ENCODE measurements at regions of chr6 and their contacts with region 1.

Region 1: GRCh38 chr6:110179401-110180227 is at the start of gene WASF1:
- DNase-seq: peak; percentile 77 to 95 (median 89)
- ATAC-seq: peak; percentile 84
- H3K4me3 ChIP-seq: peak within 1 kb of the TSS; percentile 83 to 96
- H3K4me3 Mint-ChIP-seq: peak within 1 kb of the TSS; percentile 77
- H3K27ac ChIP-seq: peak within 1 kb of the TSS; percentile 72 to 79
- H3K27ac Mint-ChIP-seq: peak within 1 kb of the TSS; percentile 38
- H3K4me1 ChIP-seq: peaks cover 28% of the 10 kb centered on the region
- H3K4me1 Mint-ChIP-seq: peaks cover 7% of the 10 kb centered on the region
- H3K27me3 ChIP-seq: no peaks in the 10 kb centered on the region
- H3K27me3 Mint-ChIP-seq: peaks cover 9% of the 10 kb centered on the region
- CTCF ChIP-seq: no peak
- total RNA-seq, gene WASF1: 1.1 to 1.7 TPM

Region 2: GRCh38 chr6:109482905-109483735 is 696.5 kb before region 1 on chr6 and contains the start of gene ZBTB24:
- CTCF ChIA-PET with region 1: no interaction called
- POLR2A ChIA-PET with region 1: no interaction called
- intact Hi-C with region 1: loop called (anchors 1 kb)
- DNase-seq: peak; percentile 75 to 96 (median 88)
- ATAC-seq: peak; percentile 85
- H3K4me3 ChIP-seq: peak within 1 kb of the TSS; percentile 65 to 69
- H3K4me3 Mint-ChIP-seq: peak within 1 kb of the TSS; percentile 95
- H3K27ac ChIP-seq: peak within 1 kb of the TSS; percentile 49 to 62
- H3K27ac Mint-ChIP-seq: peak within 1 kb of the TSS; percentile 89
- H3K4me1 ChIP-seq: peaks cover 37% of the 10 kb centered on the region
- H3K4me1 Mint-ChIP-seq: peaks cover 50% of the 10 kb centered on the region
- H3K27me3 ChIP-seq: no peaks in the 10 kb centered on the region
- H3K27me3 Mint-ChIP-seq: no peaks in the 10 kb centered on the region
- CTCF ChIP-seq: no peak
- total RNA-seq, gene ZBTB24: 10.9 to 11.2 TPM

Region 3: GRCh38 chr6:109705258-109705657 is 474.4 kb before region 1 on chr6:
- CTCF ChIA-PET with region 1: no interaction called
- POLR2A ChIA-PET with region 1: no interaction called
- intact Hi-C with region 1: loop called (anchors 5 kb)
- DNase-seq: peak; percentile 50 to 90 (median 72)
- ATAC-seq: peak; percentile 98
- H3K4me3 ChIP-seq: no peak overlapping the region
- H3K4me3 Mint-ChIP-seq: no peak overlapping the region
- H3K27ac ChIP-seq: no peak overlapping the region
- H3K27ac Mint-ChIP-seq: no peak overlapping the region
- H3K4me1 ChIP-seq: peaks cover 10% of the 10 kb centered on the region
- H3K4me1 Mint-ChIP-seq: peaks cover 27% of the 10 kb centered on the region
- H3K27me3 ChIP-seq: no peaks in the 10 kb centered on the region
- H3K27me3 Mint-ChIP-seq: no peaks in the 10 kb centered on the region
- CTCF ChIP-seq: peak; percentile 82

Region 4: DNA sequence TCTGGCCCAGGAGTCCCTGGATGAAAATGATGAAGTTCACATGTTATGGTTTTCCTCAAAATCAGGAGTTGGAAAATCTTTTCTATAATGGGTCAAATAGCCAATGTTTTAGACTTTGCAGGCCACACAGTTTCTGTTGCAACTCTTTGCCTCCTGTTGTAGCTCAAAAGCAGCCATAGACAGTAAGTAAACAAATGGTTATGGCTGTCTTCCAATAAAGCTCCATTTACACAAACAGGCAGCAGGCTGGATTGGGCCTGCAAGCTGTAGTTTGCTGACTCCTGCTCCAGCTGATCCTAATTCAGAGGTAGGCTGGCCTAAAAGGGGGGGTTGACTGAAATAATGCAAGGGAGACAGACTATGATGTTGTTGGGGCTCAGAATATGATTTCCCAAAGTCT is 145.6 kb after region 1 on chr6:
- CTCF ChIA-PET with region 1: no interaction called
- POLR2A ChIA-PET with region 1: no interaction called
- intact Hi-C with region 1: no loop called
- DNase-seq: no peak
- ATAC-seq: no peak
- H3K4me3 ChIP-seq: no peak overlapping the region
- H3K4me3 Mint-ChIP-seq: no peak overlapping the region
- H3K27ac ChIP-seq: no peak overlapping the region
- H3K27ac Mint-ChIP-seq: no peak overlapping the region
- H3K4me1 ChIP-seq: no peaks in the 10 kb centered on the region
- H3K4me1 Mint-ChIP-seq: peaks cover 10% of the 10 kb centered on the region
- H3K27me3 ChIP-seq: peaks cover 0 to 2% of the 10 kb centered on the region in 2 experiments
- H3K27me3 Mint-ChIP-seq: no peaks in the 10 kb centered on the region
- CTCF ChIP-seq: no peak

Region 5: DNA sequence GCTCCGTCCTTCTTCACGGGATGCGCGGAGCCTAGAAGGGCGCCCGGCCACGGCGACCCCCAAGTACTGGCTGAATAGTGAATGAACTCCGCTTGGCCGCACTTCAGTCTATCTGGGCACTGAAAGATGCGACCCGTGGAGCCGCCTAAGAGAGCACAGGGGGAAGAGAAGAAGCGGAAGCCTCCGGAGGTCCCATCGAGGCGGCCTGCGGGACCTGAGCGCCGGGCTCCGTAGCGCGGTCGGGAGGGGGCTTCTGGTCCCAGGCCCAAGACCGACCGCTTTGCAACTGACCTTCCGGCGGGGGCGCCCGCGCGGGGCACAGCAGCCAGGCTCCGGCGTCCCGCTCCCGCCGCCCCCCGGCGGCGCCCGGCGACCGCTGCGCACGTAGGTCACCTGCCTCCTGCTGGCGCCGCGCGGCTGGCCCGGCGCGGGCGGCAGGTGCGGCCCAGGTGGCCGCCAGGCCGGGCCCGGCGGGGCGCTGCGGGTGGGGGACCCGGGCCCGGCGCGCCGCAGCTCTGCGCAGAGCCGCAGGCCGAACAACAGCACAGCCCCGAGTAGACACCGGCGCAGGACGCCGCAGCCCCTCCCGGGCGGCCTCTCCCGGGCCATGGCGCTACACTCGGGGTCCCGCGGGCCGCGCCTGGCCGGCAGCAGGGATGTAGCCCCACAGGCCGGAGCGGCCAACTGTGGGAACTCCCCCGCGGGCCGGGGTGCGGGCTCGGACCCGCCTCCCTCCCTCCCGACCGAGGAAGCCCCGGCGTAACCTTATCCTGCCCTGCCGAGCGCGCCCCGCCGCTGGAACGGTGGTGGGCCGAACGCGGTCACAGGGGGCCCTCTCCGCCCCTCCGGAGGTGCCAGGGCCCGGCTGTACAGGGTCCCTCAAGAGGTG is 178.3 kb after region 1 on chr6 and contains the start of gene METTL24:
- CTCF ChIA-PET with region 1: no interaction called
- POLR2A ChIA-PET with region 1: no interaction called
- intact Hi-C with region 1: loop called in 1 of 2 experiments (anchors 5 kb)
- DNase-seq: peak in 7 of 9 experiments; percentile 13 to 62 (median 29)
- ATAC-seq: peak; percentile 63
- H3K4me3 ChIP-seq: peak within 1 kb of the TSS; percentile 49 to 57
- H3K4me3 Mint-ChIP-seq: peak within 1 kb of the TSS; percentile 89
- H3K27ac ChIP-seq: peak within 1 kb of the TSS in 1 of 2 experiments; percentile 7
- H3K27ac Mint-ChIP-seq: peak within 1 kb of the TSS; percentile 85
- H3K4me1 ChIP-seq: peaks cover 17% of the 10 kb centered on the region
- H3K4me1 Mint-ChIP-seq: peaks cover 19% of the 10 kb centered on the region
- H3K27me3 ChIP-seq: no peaks in the 10 kb centered on the region
- H3K27me3 Mint-ChIP-seq: peaks cover 28% of the 10 kb centered on the region
- CTCF ChIP-seq: no peak
- total RNA-seq, gene METTL24: 0.33 TPM in 1 of 2 experiments, not detected in the other

Region 6: GRCh38 chr6:110389689-110390382 is 210.2 kb after region 1 on chr6:
- CTCF ChIA-PET with region 1: interaction called, 34 read pairs
- POLR2A ChIA-PET with region 1: interaction called, 36 read pairs
- intact Hi-C with region 1: loop called (anchors 1 kb)
- DNase-seq: peak in 3 of 9 experiments; percentile 14 to 53 (median 36)
- ATAC-seq: peak; percentile 45
- H3K4me3 ChIP-seq: no peak overlapping the region
- H3K4me3 Mint-ChIP-seq: peak overlapping the region; percentile 35
- H3K27ac ChIP-seq: peak overlapping the region in 1 of 2 experiments; percentile 26
- H3K27ac Mint-ChIP-seq: peak overlapping the region; percentile 93
- H3K4me1 ChIP-seq: peaks cover 33% of the 10 kb centered on the region
- H3K4me1 Mint-ChIP-seq: peaks cover 39% of the 10 kb centered on the region
- H3K27me3 ChIP-seq: no peaks in the 10 kb centered on the region
- H3K27me3 Mint-ChIP-seq: no peaks in the 10 kb centered on the region
- CTCF ChIP-seq: no peak

Region 7: GRCh38 chr6:110958329-110959192 is 778.9 kb after region 1 on chr6 and contains the start of gene GTF3C6:
- CTCF ChIA-PET with region 1: no interaction called
- POLR2A ChIA-PET with region 1: no interaction called
- intact Hi-C with region 1: loop called (anchors 5 to 10 kb)
- DNase-seq: peak; percentile 81 to 95 (median 93)
- ATAC-seq: peak; percentile 99
- H3K4me3 ChIP-seq: peak within 1 kb of the TSS; percentile 97 to 99
- H3K4me3 Mint-ChIP-seq: peak within 1 kb of the TSS; percentile 100
- H3K27ac ChIP-seq: peak within 1 kb of the TSS; percentile 91 to 92
- H3K27ac Mint-ChIP-seq: peak within 1 kb of the TSS; percentile 100
- H3K4me1 ChIP-seq: peaks cover 5% of the 10 kb centered on the region
- H3K4me1 Mint-ChIP-seq: peaks cover 21% of the 10 kb centered on the region
- H3K27me3 ChIP-seq: no peaks in the 10 kb centered on the region
- H3K27me3 Mint-ChIP-seq: peaks cover 5% of the 10 kb centered on the region
- CTCF ChIP-seq: no peak
- total RNA-seq, gene GTF3C6: 25.0 to 26.3 TPM

Region 8: DNA sequence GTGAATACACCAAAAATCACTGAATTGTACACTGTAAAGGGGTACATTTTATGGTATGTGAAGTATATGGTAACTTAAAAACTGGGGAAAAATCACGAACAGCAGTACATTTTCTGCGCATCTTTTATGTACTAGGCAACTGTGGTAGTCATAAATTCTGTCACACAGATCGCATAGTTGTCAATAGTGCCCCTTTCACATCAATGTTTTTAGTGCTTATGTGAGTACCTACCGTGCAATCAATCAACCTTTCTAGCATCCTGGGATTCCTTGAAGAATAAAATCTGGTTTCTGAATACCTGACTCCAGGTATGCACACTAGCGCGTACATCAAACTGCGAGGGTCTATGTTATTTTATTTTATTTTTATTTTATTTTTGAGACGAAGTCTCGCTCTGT is 801.6 kb after region 1 on chr6:
- CTCF ChIA-PET with region 1: no interaction called
- POLR2A ChIA-PET with region 1: no interaction called
- intact Hi-C with region 1: loop called in 1 of 2 experiments (anchors 5 kb)
- DNase-seq: peak in 1 of 9 experiments; percentile 49
- ATAC-seq: peak; percentile 1
- H3K4me3 ChIP-seq: peak overlapping the region; percentile 85 to 95
- H3K4me3 Mint-ChIP-seq: peak overlapping the region; percentile 99
- H3K27ac ChIP-seq: peak overlapping the region; percentile 90 to 97
- H3K27ac Mint-ChIP-seq: peak overlapping the region; percentile 100
- H3K4me1 ChIP-seq: peaks cover 6% of the 10 kb centered on the region
- H3K4me1 Mint-ChIP-seq: peaks cover 45% of the 10 kb centered on the region
- H3K27me3 ChIP-seq: no peaks in the 10 kb centered on the region
- H3K27me3 Mint-ChIP-seq: no peaks in the 10 kb centered on the region
- CTCF ChIP-seq: no peak